AG04449 (cell line): ENCODE measurements at regions of chr4 and their contacts with region 1.

Region 1: GRCh38 chr4:102610007-102610406 is 108.8 kb downstream of the NFKB1 start:
- DNase-seq: no peak
- H3K4me3 ChIP-seq: no peak overlapping the region
- CTCF ChIP-seq: peak; percentile 26

Region 2: GRCh38 chr4:102324730-102325129 is 285.3 kb before region 1 on chr4:
- CTCF ChIA-PET with region 1: no interaction called
- POLR2A ChIA-PET with region 1: no interaction called
- DNase-seq: no peak
- H3K4me3 ChIP-seq: no peak overlapping the region
- CTCF ChIP-seq: no peak

Region 3: DNA sequence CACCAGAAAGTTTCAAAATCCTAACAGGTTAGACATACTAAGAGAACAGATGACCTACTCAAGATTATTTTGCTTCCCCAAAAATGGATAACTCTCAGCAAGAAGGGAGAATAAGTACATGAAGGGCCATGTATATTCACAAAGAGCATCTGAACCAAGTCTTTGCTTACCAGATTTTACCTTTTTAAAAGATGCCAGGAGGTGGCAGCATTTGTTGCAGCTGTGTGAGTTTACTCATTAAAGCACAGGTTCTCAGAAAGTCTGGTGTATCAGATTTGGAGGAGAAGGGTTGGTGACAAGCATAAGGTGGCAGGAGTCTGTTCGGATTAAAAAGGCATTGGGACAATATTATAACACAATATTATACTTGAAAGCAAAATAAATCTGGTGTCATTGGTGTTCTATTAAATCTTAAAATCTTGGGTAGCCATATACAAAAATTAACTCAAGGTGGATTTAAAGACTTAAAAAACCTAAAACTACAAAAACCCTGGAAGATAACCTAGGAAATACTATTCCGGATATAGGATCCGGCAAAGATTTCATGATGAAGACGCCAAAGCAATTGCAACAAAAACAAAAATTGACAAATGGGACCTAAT is 160.2 kb before region 1 on chr4:
- CTCF ChIA-PET with region 1: interaction called, 13 read pairs
- POLR2A ChIA-PET with region 1: no interaction called
- DNase-seq: no peak
- H3K4me3 ChIP-seq: no peak overlapping the region
- CTCF ChIP-seq: peak; percentile 50